Calu3 (cell line): ENCODE measurements at regions of chr5 and their contacts with region 1.

Region 1: GRCh38 chr5:39948867-39949468 is 524.2 kb upstream of the DAB2 start:
- DNase-seq: peak; percentile 64
- H3K4me3 Mint-ChIP-seq: no peak overlapping the region
- H3K27ac Mint-ChIP-seq: no peak overlapping the region
- H3K4me1 Mint-ChIP-seq: peaks cover 7% of the 10 kb centered on the region
- H3K27me3 Mint-ChIP-seq: no peaks in the 10 kb centered on the region
- CTCF ChIP-seq: peak; percentile 72

Region 2: GRCh38 chr5:39578887-39579497 is 370.0 kb before region 1 on chr5:
- CTCF ChIA-PET with region 1: no interaction called
- intact Hi-C with region 1: loop called (anchors 5 kb)
- DNase-seq: no peak
- H3K4me3 Mint-ChIP-seq: no peak overlapping the region
- H3K27ac Mint-ChIP-seq: no peak overlapping the region
- H3K4me1 Mint-ChIP-seq: peaks cover 18% of the 10 kb centered on the region
- H3K27me3 Mint-ChIP-seq: no peaks in the 10 kb centered on the region
- CTCF ChIP-seq: peak; percentile 42

Region 3: GRCh38 chr5:39599721-39600431 is 349.1 kb before region 1 on chr5:
- CTCF ChIA-PET with region 1: no interaction called
- intact Hi-C with region 1: loop called (anchors 10 kb)
- DNase-seq: no peak
- H3K4me3 Mint-ChIP-seq: no peak overlapping the region
- H3K27ac Mint-ChIP-seq: no peak overlapping the region
- H3K4me1 Mint-ChIP-seq: no peaks in the 10 kb centered on the region
- H3K27me3 Mint-ChIP-seq: no peaks in the 10 kb centered on the region
- CTCF ChIP-seq: peak; percentile 33

Region 4: GRCh38 chr5:39714036-39714698 is 234.8 kb before region 1 on chr5:
- CTCF ChIA-PET with region 1: no interaction called
- intact Hi-C with region 1: loop called (anchors 2 kb)
- DNase-seq: peak; percentile 61
- H3K4me3 Mint-ChIP-seq: no peak overlapping the region
- H3K27ac Mint-ChIP-seq: no peak overlapping the region
- H3K4me1 Mint-ChIP-seq: peaks cover 31% of the 10 kb centered on the region
- H3K27me3 Mint-ChIP-seq: no peaks in the 10 kb centered on the region
- CTCF ChIP-seq: peak; percentile 52

Region 5: DNA sequence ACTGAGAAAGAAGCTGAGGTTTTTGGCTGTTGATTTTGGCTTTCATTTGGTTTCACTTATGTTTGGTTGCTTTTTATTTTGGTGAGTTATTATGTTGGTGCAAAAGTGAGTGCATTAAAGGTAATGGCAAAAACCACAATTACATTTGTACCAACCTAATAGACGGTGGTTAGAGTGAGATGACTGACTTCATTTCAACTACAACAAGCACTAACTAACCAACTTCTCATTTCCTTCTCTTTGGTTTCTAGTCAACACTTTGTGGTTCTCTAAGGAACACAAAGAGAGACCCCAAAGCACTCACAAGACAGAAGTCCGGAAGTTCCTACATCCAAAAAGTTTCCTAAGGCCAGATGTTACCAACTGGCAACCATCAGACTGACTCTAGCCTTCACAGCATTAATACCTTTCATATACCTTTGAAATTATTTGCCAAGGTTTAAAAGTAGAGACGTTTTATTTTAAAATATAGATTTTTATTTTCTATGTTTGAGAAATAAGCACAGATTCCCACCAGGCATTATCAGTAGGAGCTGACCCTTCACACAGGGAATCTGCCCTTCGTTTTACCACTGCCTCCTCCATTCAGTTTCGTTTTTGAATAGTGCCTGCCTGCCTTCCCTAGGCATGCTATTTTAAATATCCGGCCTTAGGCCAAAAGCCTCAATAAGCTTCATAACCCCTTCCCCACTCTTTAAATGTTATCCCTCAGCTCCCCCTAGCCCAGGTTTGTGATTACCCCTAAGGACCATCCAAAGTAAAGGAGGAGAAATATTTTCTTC is 429.6 kb after region 1 on chr5:
- CTCF ChIA-PET with region 1: no interaction called
- intact Hi-C with region 1: loop called (anchors 10 kb)
- DNase-seq: no peak
- H3K4me3 Mint-ChIP-seq: no peak overlapping the region
- H3K27ac Mint-ChIP-seq: no peak overlapping the region
- H3K4me1 Mint-ChIP-seq: peaks cover 13% of the 10 kb centered on the region
- H3K27me3 Mint-ChIP-seq: no peaks in the 10 kb centered on the region
- CTCF ChIP-seq: no peak

Region 6: GRCh38 chr5:40736103-40736875 is 787.3 kb after region 1 on chr5:
- CTCF ChIA-PET with region 1: no interaction called
- intact Hi-C with region 1: loop called (anchors 2 kb)
- DNase-seq: peak; percentile 25
- H3K4me3 Mint-ChIP-seq: no peak overlapping the region
- H3K27ac Mint-ChIP-seq: peak overlapping the region; percentile 73
- H3K4me1 Mint-ChIP-seq: peaks cover 29% of the 10 kb centered on the region
- H3K27me3 Mint-ChIP-seq: no peaks in the 10 kb centered on the region
- CTCF ChIP-seq: peak; percentile 46